AG04449 (cell line): ENCODE measurements at regions of chr1 and their contacts with region 1.

Region 1: DNA sequence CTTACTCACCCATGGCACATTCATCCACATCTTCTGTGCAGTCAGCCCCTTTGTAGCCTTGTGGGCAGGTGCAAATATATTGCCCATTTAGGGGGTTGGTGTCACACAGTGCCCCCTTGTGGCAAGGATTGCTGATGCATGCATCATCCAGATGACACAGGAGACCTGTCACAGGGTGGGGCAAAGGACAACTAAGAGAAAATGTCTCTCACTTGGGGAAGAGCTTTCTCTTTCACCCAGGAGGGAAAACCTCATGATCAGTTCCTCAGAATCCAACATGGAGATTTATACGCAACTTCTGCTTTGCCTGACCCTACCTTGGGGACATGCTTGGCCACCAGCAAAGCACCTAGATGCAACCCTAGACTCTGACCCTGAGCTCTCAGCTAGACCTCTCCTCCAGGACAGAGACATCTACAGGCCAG is 71.8 kb upstream of the ADAM30 start:
- DNase-seq: no peak
- H3K4me3 ChIP-seq: no peak overlapping the region
- CTCF ChIP-seq: peak; percentile 64

Region 2: GRCh38 chr1:119702384-119702783 is 265.7 kb before region 1 on chr1:
- CTCF ChIA-PET with region 1: no interaction called
- POLR2A ChIA-PET with region 1: no interaction called
- DNase-seq: no peak
- H3K4me3 ChIP-seq: no peak overlapping the region
- CTCF ChIP-seq: no peak

Region 3: DNA sequence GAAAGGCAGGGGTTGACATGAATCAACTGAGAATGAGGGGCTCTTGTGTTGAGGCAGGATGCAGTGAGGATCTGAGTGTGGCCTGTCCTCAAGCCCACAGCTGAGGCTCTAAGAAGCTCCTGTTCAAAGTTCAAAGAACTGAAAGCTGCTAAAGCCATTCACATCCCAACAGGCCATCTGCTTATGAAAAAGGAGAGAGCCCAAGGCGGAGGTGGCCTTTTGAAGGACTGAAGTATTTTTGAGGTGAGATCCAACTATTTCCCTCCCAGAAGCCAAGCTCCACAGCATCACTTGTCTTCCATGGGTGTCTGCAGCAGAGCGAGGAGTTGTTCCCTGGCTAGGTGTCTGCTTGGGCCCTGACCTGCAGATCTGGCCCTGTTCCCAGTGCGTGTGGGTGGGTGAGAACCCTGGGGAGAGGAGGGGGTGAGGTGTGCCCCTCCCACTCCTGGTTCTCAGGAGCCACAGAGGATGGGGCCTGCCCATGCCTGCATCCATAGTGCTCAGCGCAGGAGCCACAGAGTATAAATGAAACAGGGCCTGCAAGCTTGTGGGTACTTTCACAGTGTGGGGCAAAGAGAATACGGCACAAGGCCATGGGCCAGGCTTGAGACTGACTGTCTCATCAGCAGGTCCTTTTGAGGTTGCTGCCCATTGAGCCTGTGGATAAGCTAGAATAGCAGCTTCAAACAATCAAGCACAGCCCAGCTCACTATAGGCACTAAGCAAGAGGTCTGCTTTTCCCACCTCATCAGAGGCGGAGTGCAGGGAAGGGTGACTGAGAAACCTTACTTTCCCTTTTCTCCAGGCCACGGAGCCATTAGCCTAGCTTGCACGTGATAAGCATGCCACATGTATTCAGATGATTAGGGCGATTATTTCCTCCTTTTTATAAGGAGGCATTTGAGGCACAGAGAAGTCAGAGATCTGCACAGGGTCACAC is 172.5 kb before region 1 on chr1:
- CTCF ChIA-PET with region 1: no interaction called
- POLR2A ChIA-PET with region 1: no interaction called
- DNase-seq: no peak
- H3K4me3 ChIP-seq: no peak overlapping the region
- CTCF ChIP-seq: no peak

Region 4: GRCh38 chr1:119941392-119941791 is 26.7 kb before region 1 on chr1:
- CTCF ChIA-PET with region 1: no interaction called
- POLR2A ChIA-PET with region 1: no interaction called
- DNase-seq: no peak
- H3K4me3 ChIP-seq: no peak overlapping the region
- CTCF ChIP-seq: no peak

Region 5: DNA sequence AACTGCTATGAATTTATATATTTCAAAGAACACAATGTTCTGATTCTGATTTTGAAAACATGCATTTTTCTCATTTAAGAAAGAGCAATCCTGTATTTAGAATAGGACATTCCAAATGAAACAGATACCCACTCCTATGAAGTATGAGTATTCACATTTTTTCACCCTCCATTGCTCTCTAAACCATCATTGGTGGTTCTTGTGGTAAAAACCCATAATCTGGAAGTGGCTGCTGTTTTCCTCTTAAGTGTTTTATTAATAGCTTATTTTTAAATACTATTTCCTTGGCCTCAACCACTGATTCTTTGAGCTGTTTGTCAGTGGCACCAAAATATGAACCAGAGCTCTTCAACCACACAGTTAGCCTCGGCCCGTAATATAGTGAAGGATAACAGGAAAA is 11.8 kb before region 1 on chr1:
- CTCF ChIA-PET with region 1: interaction called, 67 read pairs
- POLR2A ChIA-PET with region 1: no interaction called
- DNase-seq: no peak
- H3K4me3 ChIP-seq: no peak overlapping the region
- CTCF ChIP-seq: no peak

Region 6: DNA sequence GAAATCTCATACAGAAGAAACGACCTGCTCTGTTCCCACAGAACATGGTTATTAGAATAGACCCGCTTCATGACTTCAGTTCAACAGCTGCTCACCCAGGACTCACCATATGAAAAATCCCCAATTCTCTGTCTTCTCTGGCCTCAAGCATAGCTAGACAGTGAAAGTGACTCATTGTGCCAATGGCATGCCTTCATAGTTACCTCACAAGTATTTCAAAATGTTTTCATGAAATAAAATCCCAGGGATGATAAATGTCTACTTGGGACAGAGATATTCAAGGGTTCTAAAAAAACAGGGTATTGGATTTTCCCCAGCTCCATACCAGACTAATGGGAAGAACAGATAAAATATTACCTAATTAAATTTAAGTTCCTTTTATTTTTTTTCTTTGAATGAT is 19.0 kb after region 1 on chr1:
- CTCF ChIA-PET with region 1: interaction called, 30 read pairs
- POLR2A ChIA-PET with region 1: interaction called, 3 read pairs
- DNase-seq: peak; percentile 90
- H3K4me3 ChIP-seq: no peak overlapping the region
- CTCF ChIP-seq: no peak